Upper lobe of right lung (tissue), 1 donor: ENCODE measurements at regions of chr1 and their contacts with region 1.

Region 1: GRCh38 chr1:77978969-77979876 is at the start of gene FUBP1:
- DNase-seq: peak; percentile 94
- ATAC-seq: peak; percentile 93
- H3K4me3 ChIP-seq: peak within 1 kb of the TSS; percentile 71
- H3K27ac ChIP-seq: peak within 1 kb of the TSS; percentile 98
- H3K4me1 ChIP-seq: peaks cover 35% of the 10 kb centered on the region
- H3K27me3 ChIP-seq: no peaks in the 10 kb centered on the region
- CTCF ChIP-seq: peak; percentile 74
- total RNA-seq, gene FUBP1: 88.8 TPM

Region 2: GRCh38 chr1:77473690-77474089 is 505.5 kb before region 1 on chr1:
- intact Hi-C with region 1: no loop called
- DNase-seq: no peak
- ATAC-seq: no peak
- H3K4me3 ChIP-seq: no peak overlapping the region
- H3K27ac ChIP-seq: no peak overlapping the region
- H3K4me1 ChIP-seq: no peaks in the 10 kb centered on the region
- H3K27me3 ChIP-seq: peaks cover 5% of the 10 kb centered on the region
- CTCF ChIP-seq: no peak

Region 3: GRCh38 chr1:77926561-77927357 is 52.5 kb before region 1 on chr1:
- intact Hi-C with region 1: no loop called
- DNase-seq: no peak
- ATAC-seq: no peak
- H3K4me3 ChIP-seq: peak overlapping the region; percentile 21
- H3K27ac ChIP-seq: no peak overlapping the region
- H3K4me1 ChIP-seq: no peaks in the 10 kb centered on the region
- H3K27me3 ChIP-seq: no peaks in the 10 kb centered on the region
- CTCF ChIP-seq: no peak

Region 4: GRCh38 chr1:78019018-78019417 is 39.8 kb after region 1 on chr1:
- intact Hi-C with region 1: no loop called
- DNase-seq: no peak
- ATAC-seq: no peak
- H3K4me3 ChIP-seq: no peak overlapping the region
- H3K27ac ChIP-seq: no peak overlapping the region
- H3K4me1 ChIP-seq: no peaks in the 10 kb centered on the region
- H3K27me3 ChIP-seq: no peaks in the 10 kb centered on the region
- CTCF ChIP-seq: no peak

Region 5: DNA sequence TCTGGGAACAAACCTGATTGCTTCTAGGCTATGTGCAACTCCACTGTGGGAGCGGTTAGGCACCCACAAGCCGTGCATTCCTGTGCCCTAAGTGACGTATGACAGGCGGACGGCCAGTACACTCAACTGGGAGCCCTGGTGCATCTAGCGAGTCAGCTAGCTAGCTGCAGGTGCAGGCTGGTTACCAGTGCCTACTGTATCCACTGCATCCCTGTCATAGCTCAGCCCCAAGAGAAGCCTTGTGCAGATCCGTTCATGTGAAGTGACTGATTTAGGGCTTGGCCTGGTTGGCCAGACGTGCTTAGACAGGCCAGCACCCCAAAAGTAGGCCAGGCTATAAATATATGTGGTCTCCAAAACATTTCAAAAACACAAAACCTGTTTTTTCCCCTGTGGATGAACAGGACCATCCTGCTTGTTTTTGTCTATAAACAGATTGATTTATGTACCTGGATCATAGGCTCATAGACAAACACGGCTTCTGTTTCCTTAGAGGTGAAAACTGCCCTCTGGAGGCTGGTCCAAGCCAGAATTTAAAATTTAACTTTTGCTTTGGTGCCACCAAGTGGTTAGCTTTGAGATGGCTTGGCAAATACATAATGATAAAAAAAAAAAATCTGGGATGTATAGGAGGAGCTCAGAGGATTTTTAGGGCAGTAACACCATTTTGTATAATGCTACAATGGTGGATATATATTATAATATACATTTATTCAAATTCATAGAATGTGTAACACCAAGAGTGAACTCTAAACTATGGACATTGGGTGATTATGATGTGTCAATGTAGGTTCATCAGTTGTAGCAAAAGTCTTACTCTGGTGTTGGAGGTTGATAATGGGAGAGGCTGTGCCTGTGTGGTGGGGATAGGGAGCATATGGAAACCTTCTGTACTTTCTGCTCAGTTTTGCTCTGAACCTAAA is 135.1 kb after region 1 on chr1:
- intact Hi-C with region 1: loop called (anchors 10 kb)
- DNase-seq: no peak
- ATAC-seq: peak; percentile 94
- H3K4me3 ChIP-seq: no peak overlapping the region
- H3K27ac ChIP-seq: no peak overlapping the region
- H3K4me1 ChIP-seq: no peaks in the 10 kb centered on the region
- H3K27me3 ChIP-seq: no peaks in the 10 kb centered on the region
- CTCF ChIP-seq: peak; percentile 88